Head of caudate nucleus (tissue), 42 donors: ENCODE measurements at regions of chr12 and their contacts with region 1.

Region 1: DNA sequence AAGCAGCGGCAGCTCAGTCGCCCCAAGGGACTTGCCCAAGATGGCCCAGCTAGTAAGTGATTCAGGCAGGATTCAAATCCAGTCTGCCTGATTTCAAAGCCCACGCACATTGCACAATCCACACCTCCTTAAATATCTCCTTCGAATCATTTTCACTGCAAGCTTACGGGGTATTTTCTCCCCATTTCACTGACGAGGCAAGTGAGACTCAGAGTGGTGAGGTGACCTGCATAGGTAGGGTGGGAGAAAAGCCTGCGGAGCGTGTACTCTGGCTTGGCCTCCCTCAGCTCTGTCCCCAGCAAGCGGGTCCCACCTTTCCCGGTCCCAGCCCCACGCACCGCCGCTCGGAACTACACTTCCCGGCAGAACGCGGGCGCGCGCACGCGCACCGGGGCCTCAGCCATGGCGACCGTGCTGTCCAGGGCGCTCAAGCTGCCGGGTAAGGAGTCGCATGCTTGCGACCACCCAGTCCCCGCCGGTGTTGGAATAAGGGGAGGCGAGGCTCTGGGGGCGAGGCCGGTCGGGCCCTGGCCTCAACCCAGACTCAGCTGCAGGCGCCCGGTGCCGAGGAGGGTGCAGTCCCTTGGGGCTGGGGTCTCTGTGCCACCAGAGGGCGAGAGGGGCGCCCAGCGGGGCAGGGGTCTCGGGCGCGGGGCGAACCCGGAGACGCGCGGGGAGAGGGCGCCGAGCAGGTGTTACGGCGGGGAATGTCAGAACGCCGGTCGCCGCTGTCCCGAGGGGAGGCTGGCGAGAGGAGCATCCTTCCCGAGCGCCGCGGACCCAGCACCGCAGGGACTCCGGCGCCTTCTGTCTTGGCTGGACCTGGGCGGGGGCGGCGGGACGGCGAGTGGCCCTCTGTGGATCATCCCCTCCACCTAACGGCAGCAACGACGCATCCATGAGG is at the start of gene FAM234B:
- DNase-seq: peak; percentile 55 to 94 (median 87)

Region 2: GRCh38 chr12:12158858-12159257 is 885.4 kb before region 1 on chr12:
- intact Hi-C with region 1: no loop called
- DNase-seq: no peak

Region 3: DNA sequence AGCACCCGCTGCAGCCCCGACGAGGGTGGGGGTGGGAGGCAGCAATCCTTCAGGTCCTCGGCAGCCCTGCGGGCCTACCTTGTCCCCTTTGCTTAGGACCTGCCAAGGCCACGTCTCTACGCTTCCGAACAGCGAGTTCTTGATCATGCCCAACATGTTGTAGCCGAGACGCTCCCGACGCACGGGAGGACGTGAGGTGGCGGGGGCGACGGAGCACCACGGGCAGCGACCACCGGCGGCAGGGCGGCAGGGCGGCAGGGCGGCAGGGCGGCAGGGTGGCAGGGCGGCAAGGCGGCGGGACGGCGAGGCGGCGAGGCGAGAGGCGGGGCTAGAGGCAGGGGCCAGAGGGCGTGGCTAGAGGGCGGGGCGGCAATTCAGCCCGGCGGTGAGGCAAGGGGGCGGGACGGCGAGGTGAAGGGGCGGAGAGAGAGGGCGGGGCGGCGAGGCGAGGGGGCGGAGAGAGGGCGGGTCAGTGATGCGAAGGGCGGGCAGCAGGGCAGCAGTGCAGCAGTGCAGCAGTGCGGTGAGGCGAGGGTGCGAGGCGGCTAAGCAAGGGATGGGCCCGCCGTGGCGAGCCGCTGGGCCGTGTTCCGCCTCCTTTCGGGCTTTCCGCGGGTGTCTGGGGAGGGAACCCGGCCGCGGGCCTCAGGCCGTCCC is 44.2 kb before region 1 on chr12 and contains the start of gene HEBP1:
- intact Hi-C with region 1: loop called (anchors 5 kb)
- DNase-seq: peak; percentile 87 to 100 (median 98)

Region 4: GRCh38 chr12:13100882-13101769 is 56.9 kb after region 1 on chr12:
- intact Hi-C with region 1: no loop called
- DNase-seq: peak; percentile 74 to 96 (median 88)